A549 (cell line): ENCODE measurements at regions of chr5 and their contacts with region 1.

Region 1: DNA sequence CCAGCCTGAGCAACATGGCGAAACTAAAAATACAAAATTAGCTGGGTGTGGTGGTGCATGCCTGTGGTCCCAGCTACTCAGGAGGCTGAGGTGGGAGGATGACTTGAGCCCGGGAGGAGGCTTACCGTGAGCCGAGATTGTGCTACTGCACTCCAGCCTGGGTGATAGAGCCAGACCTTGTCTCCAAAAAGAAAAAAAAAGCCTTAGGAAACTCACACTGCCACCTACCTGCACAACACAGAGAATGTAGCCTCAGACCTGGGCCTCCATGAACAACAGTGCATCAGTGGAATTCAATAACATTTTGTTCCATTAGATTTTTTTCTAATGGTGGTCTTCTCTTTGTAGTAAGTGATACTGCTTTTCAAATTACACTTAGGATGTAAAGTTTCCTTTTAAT is 63.8 kb upstream of the RARS1 start:
- DNase-seq: peak in 1 of 2 experiments; percentile 41
- ATAC-seq: peak; percentile 60 to 76; a peak in 4 of 6 replicates
- H3K4me3 ChIP-seq: no peak overlapping the region
- H3K27ac ChIP-seq: peak overlapping the region in 1 of 2 experiments; percentile 50; a peak in 2 of 6 replicates
- H3K4me1 ChIP-seq: peaks cover 34% of the 10 kb centered on the region
- CTCF ChIP-seq: peak; percentile 38
- EP300 ChIP-seq: no peak
- POLR2A ChIP-seq: no peak
- RAD21 ChIP-seq: peak; percentile 53 to 62; a peak in 4 of 5 replicates

Region 2: DNA sequence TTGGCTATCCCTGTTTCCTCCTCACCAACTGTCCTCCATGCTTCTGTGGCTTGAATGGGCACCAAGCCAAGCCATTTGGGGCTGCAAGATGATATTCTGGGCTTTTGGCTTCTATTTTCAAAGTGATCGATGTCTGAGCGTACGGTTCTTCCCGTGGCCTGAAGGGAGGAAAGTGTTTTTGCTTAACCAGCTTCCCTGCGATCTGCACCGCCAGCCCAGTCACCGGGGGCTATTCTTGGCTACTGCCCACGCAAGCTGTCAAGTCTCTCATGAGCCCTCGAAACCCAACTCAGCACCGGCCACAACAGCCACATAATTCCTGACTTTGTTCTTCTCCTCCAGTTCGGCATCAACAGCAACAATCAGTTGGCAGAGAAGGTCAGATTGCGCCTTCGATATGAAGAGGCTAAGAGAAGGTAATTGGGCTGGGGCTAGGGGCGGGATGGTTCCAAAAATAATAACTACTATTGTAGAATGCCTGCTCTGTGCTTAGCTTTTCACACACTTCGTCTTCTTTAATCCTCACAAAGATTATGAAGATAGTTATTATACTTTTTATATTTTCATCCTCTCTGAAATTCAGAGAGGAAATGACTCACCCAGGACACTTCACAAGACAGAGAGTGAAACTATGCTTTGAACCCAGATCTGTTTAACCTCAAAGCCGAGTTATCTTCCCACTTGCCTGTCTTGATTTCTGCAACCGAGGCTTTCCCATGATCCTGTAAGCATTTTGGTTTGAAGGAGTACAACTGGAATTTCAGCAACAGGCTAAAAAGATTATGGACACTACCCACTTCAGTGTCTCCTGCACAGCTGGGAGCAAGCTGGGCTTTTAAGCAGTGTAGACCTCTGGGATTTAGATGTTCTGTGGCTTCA is 12.6 kb before region 1 on chr5:
- CTCF ChIA-PET with region 1: interaction called, 15 read pairs
- POLR2A ChIA-PET with region 1: no interaction called
- DNase-seq: no peak
- ATAC-seq: peak in 1 of 2 experiments; percentile 10; a peak in 2 of 6 replicates
- H3K4me3 ChIP-seq: no peak overlapping the region
- H3K27ac ChIP-seq: peak overlapping the region; percentile 56 to 77
- H3K4me1 ChIP-seq: peaks cover 29% of the 10 kb centered on the region
- CTCF ChIP-seq: no peak
- EP300 ChIP-seq: no peak
- POLR2A ChIP-seq: no peak
- RAD21 ChIP-seq: no peak

Region 3: GRCh38 chr5:168696611-168697010 is 274.2 kb after region 1 on chr5:
- CTCF ChIA-PET with region 1: no interaction called
- POLR2A ChIA-PET with region 1: no interaction called
- DNase-seq: no peak
- ATAC-seq: no peak
- H3K4me3 ChIP-seq: no peak overlapping the region
- H3K27ac ChIP-seq: no peak overlapping the region
- H3K4me1 ChIP-seq: no peaks in the 10 kb centered on the region
- CTCF ChIP-seq: no peak
- EP300 ChIP-seq: no peak
- POLR2A ChIP-seq: no peak
- RAD21 ChIP-seq: no peak